MCF 10A (cell line): ENCODE measurements at regions of chr2 and their contacts with region 1.

Region 1: GRCh38 chr2:63488118-63488713 is 100.1 kb downstream of the WDPCP start:
- DNase-seq: peak; percentile 46
- H3K4me3 Mint-ChIP-seq: no peak overlapping the region
- H3K27ac Mint-ChIP-seq: no peak overlapping the region
- H3K4me1 Mint-ChIP-seq: no peaks in the 10 kb centered on the region
- H3K27me3 Mint-ChIP-seq: no peaks in the 10 kb centered on the region
- CTCF ChIP-seq: peak; percentile 54

Region 2: GRCh38 chr2:63364866-63365265 is 123.3 kb before region 1 on chr2:
- CTCF ChIA-PET with region 1: no interaction called
- POLR2A ChIA-PET with region 1: no interaction called
- intact Hi-C with region 1: no loop called
- DNase-seq: peak; percentile 11
- H3K4me3 Mint-ChIP-seq: no peak overlapping the region
- H3K27ac Mint-ChIP-seq: no peak overlapping the region
- H3K4me1 Mint-ChIP-seq: no peaks in the 10 kb centered on the region
- H3K27me3 Mint-ChIP-seq: no peaks in the 10 kb centered on the region
- CTCF ChIP-seq: no peak

Region 3: DNA sequence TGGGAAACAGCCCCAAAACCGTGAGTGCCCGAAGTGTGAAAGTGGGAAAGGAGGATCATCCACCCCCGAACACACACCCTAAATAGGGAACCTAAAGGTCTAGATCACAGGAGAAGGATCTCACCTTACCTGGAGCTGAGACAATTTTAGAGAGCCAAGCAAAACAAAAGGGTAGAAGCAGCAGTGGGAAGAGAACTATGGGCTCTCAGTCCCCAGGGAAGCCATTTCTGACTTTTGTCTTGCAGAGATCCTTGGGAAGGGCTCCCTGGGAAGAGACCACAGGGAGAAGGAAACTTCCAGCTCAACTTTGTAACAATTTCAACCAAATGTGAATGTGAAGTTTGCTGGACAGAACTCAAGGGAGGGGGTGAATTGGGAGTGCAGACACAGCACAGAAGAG is 10.5 kb before region 1 on chr2:
- CTCF ChIA-PET with region 1: interaction called, 13 read pairs
- POLR2A ChIA-PET with region 1: no interaction called
- intact Hi-C with region 1: no loop called
- DNase-seq: no peak
- H3K4me3 Mint-ChIP-seq: no peak overlapping the region
- H3K27ac Mint-ChIP-seq: no peak overlapping the region
- H3K4me1 Mint-ChIP-seq: no peaks in the 10 kb centered on the region
- H3K27me3 Mint-ChIP-seq: no peaks in the 10 kb centered on the region
- CTCF ChIP-seq: no peak

Region 4: GRCh38 chr2:63500398-63500797 is 12.2 kb after region 1 on chr2:
- CTCF ChIA-PET with region 1: interaction called, 37 read pairs
- POLR2A ChIA-PET with region 1: interaction called, 3 read pairs
- intact Hi-C with region 1: no loop called
- DNase-seq: peak; percentile 18
- H3K4me3 Mint-ChIP-seq: no peak overlapping the region
- H3K27ac Mint-ChIP-seq: no peak overlapping the region
- H3K4me1 Mint-ChIP-seq: peaks cover 7% of the 10 kb centered on the region
- H3K27me3 Mint-ChIP-seq: no peaks in the 10 kb centered on the region
- CTCF ChIP-seq: no peak